PC-9 (cell line): ENCODE measurements at regions of chr4 and their contacts with region 1.

Region 1: DNA sequence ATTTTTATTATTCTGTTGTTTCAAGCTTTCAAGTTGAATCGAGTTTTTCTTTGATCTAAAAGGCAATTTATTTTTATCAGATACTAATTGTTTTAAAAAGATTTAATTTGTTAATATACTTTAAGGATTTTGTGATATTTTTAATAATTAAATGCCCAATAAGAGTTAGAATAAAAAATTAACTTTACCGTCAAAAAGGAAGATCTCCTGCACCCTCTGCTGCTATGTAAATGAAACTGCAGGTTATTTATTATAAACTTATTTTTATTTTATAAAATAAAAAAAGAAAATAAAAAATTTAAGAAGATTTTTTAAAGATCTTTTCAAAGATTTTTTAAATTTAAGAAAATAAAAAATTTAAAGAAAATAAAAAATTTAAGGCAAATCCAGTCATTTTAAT is 166.1 kb downstream of the CCSER1 start:
- DNase-seq: no peak
- H3K4me3 ChIP-seq: no peak overlapping the region
- H3K27ac ChIP-seq: no peak overlapping the region
- H3K4me1 ChIP-seq: no peaks in the 10 kb centered on the region
- H3K27me3 ChIP-seq: no peaks in the 10 kb centered on the region
- CTCF ChIP-seq: no peak; the same call in none of the 2 replicates

Region 2: GRCh38 chr4:89226665-89227574 is 1066.4 kb before region 1 on chr4:
- CTCF ChIA-PET with region 1: no interaction called
- POLR2A ChIA-PET with region 1: no interaction called
- intact Hi-C with region 1: loop called (anchors 10 kb)
- DNase-seq: peak; percentile 34 to 49
- H3K4me3 ChIP-seq: no peak overlapping the region
- H3K27ac ChIP-seq: no peak overlapping the region
- H3K4me1 ChIP-seq: peaks cover 5% of the 10 kb centered on the region
- H3K27me3 ChIP-seq: no peaks in the 10 kb centered on the region
- CTCF ChIP-seq: peak; percentile 68

Region 3: GRCh38 chr4:89482248-89482647 is 811.1 kb before region 1 on chr4:
- CTCF ChIA-PET with region 1: no interaction called
- POLR2A ChIA-PET with region 1: no interaction called
- intact Hi-C with region 1: loop called (anchors 10 kb)
- DNase-seq: no peak
- H3K4me3 ChIP-seq: no peak overlapping the region
- H3K27ac ChIP-seq: no peak overlapping the region
- H3K4me1 ChIP-seq: no peaks in the 10 kb centered on the region
- H3K27me3 ChIP-seq: no peaks in the 10 kb centered on the region
- CTCF ChIP-seq: peak; percentile 24; the same call in 1 of the 2 replicates

Region 4: DNA sequence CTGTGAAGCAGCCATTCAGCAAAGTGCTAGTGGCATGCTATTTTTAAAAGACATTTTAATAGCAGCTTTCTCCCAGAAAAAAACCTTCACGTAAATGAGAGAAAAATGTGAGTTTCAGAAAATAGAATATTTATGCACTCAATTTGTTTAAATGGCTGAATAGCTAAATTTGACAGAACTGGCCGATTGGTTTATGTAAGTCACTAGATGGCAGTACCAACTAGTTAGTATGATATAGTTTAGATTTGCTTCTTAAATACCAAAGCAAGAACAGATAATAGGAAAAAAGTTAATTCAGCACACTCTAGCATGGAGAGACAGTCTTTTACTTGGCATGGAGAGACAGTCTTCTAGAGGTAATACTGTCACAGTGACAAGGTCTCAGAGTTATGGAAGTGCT is 706.5 kb before region 1 on chr4:
- CTCF ChIA-PET with region 1: no interaction called
- POLR2A ChIA-PET with region 1: no interaction called
- intact Hi-C with region 1: loop called (anchors 5 kb)
- DNase-seq: no peak
- H3K4me3 ChIP-seq: no peak overlapping the region
- H3K27ac ChIP-seq: no peak overlapping the region
- H3K4me1 ChIP-seq: no peaks in the 10 kb centered on the region
- H3K27me3 ChIP-seq: no peaks in the 10 kb centered on the region
- CTCF ChIP-seq: no peak

Region 5: DNA sequence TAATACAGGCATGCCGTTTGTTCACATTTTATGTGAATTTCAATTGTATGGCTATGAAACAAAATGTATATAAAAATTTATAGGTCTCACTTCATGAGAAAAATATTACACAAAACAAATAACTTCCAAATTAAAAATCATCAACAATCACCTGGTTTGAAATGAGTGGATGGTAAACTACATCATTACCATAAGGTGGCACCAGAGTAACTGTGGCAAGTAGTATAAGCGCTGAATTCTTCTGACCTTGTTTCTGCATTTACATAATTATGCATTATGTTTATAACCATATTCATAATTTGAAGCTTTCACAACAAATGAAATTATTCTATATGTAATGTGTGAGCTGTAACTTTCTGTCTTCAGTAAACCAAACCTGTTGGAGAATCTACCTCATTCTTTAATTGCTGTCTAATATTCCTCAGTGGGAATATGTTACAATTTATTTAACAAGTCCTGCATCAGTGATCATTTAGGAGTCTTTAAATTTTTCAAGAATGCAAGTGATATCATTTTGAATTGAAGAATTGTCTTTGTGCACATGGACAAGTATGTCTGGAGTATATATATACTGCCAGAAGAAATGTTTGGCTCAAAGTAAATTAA is 343.4 kb before region 1 on chr4:
- CTCF ChIA-PET with region 1: no interaction called
- POLR2A ChIA-PET with region 1: no interaction called
- intact Hi-C with region 1: loop called (anchors 10 kb)
- DNase-seq: no peak
- H3K4me3 ChIP-seq: no peak overlapping the region
- H3K27ac ChIP-seq: no peak overlapping the region
- H3K4me1 ChIP-seq: no peaks in the 10 kb centered on the region
- H3K27me3 ChIP-seq: no peaks in the 10 kb centered on the region
- CTCF ChIP-seq: peak; percentile 44; the same call in 1 of the 2 replicates

Region 6: DNA sequence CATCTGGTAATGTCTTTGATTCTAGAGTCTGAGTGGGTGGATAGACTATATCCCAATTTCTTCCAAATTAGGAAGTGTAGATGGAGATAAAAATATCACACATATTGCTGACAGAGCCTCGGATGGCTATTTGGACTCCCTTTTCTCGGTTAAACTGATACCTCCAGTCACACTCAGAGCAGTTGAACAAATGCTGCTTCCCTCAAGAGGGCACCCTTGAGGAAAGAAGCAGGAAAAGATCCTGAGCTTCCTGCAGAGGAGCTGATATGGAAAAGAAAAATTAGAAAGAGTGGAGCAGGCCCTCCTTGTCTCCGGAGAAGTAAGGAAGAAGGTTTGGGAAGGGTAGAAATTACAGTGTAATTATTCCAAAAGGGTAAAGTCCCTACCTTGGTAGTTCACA is 262.4 kb before region 1 on chr4:
- CTCF ChIA-PET with region 1: no interaction called
- POLR2A ChIA-PET with region 1: no interaction called
- intact Hi-C with region 1: loop called (anchors 2 kb)
- DNase-seq: no peak
- H3K4me3 ChIP-seq: no peak overlapping the region
- H3K27ac ChIP-seq: no peak overlapping the region
- H3K4me1 ChIP-seq: no peaks in the 10 kb centered on the region
- H3K27me3 ChIP-seq: no peaks in the 10 kb centered on the region
- CTCF ChIP-seq: no peak

Region 7: GRCh38 chr4:90137549-90137948 is 155.8 kb before region 1 on chr4:
- CTCF ChIA-PET with region 1: no interaction called
- POLR2A ChIA-PET with region 1: no interaction called
- intact Hi-C with region 1: loop called (anchors 1 kb)
- DNase-seq: no peak
- H3K4me3 ChIP-seq: no peak overlapping the region
- H3K27ac ChIP-seq: no peak overlapping the region
- H3K4me1 ChIP-seq: no peaks in the 10 kb centered on the region
- H3K27me3 ChIP-seq: no peaks in the 10 kb centered on the region
- CTCF ChIP-seq: no peak

Region 8: DNA sequence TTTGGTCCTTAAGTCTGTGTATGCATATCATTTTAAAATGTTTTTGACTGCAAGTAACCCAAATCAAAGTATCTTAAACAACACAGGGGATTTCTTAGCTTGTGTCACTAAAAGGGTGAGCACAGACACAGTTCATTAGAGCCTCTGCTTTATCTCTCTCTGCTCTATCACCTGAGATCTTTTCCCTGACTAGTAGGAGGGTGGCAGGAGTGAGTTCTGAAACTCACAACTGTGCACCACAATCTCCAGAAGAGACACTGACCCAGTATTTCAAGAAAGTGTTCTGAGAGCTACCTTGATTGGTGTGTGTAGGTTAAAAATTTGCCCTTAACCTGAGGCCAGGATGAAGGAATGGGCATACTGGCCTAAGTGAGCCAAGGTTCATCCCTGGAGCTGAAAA is 141.3 kb before region 1 on chr4:
- CTCF ChIA-PET with region 1: no interaction called
- POLR2A ChIA-PET with region 1: no interaction called
- intact Hi-C with region 1: no loop called
- DNase-seq: no peak
- H3K4me3 ChIP-seq: no peak overlapping the region
- H3K27ac ChIP-seq: no peak overlapping the region
- H3K4me1 ChIP-seq: no peaks in the 10 kb centered on the region
- H3K27me3 ChIP-seq: no peaks in the 10 kb centered on the region
- CTCF ChIP-seq: no peak